ENCODE measurements at regions of chr14 and their contacts with region 1.

Region 1: GRCh38 chr14:68788996-68789820 is 3.7 kb downstream of the ZFP36L1 start:
- DNase-seq: peak; percentile 70 to 91 (median 88)
- ATAC-seq: peak; percentile 64
- H3K4me3 ChIP-seq: peak overlapping the region; percentile 91
- H3K4me3 Mint-ChIP-seq: peak overlapping the region; percentile 92 to 99 (median 95)
- H3K27ac ChIP-seq: peak overlapping the region; percentile 100
- H3K27ac Mint-ChIP-seq: peak overlapping the region; percentile 91 to 100 (median 99)
- H3K4me1 ChIP-seq: peaks cover 37 to 43% of the 10 kb centered on the region in 2 donors
- H3K4me1 Mint-ChIP-seq: peaks cover 43 to 61% (median 50%) of the 10 kb centered on the region in 7 donors
- H3K27me3 ChIP-seq: no peaks in the 10 kb centered on the region
- H3K27me3 Mint-ChIP-seq: peaks cover 0 to 2% (median 0%) of the 10 kb centered on the region in 5 donors

Region 2: GRCh38 chr14:67934008-67934481 is 855.2 kb before region 1 on chr14:
- CTCF ChIA-PET with region 1: no interaction called
- POLR2A ChIA-PET with region 1: no interaction called
- intact Hi-C with region 1: loop called in 1 of 2 experiments (anchors 1 kb)
- DNase-seq: peak in 7 of 9 donors; percentile 24 to 64 (median 43)
- ATAC-seq: peak; percentile 80
- H3K4me3 ChIP-seq: no peak overlapping the region
- H3K4me3 Mint-ChIP-seq: peak overlapping the region in 2 of 10 donors; percentile 15 to 28
- H3K27ac ChIP-seq: peak overlapping the region; percentile 10
- H3K27ac Mint-ChIP-seq: peak overlapping the region in 7 of 9 donors; percentile 2 to 70 (median 56)
- H3K4me1 ChIP-seq: no peaks in the 10 kb centered on the region
- H3K4me1 Mint-ChIP-seq: peaks cover 3 to 11% (median 9%) of the 10 kb centered on the region in 7 donors
- H3K27me3 ChIP-seq: no peaks in the 10 kb centered on the region
- H3K27me3 Mint-ChIP-seq: no peaks in the 10 kb centered on the region

Region 3: GRCh38 chr14:68274725-68275124 is 514.5 kb before region 1 on chr14:
- CTCF ChIA-PET with region 1: interaction called, 5 read pairs
- POLR2A ChIA-PET with region 1: interaction called, 10 read pairs
- intact Hi-C with region 1: no loop called
- DNase-seq: no peak
- ATAC-seq: no peak
- H3K4me3 ChIP-seq: no peak overlapping the region
- H3K4me3 Mint-ChIP-seq: peak overlapping the region in 4 of 10 donors; percentile 7 to 55 (median 41)
- H3K27ac ChIP-seq: no peak overlapping the region
- H3K27ac Mint-ChIP-seq: peak overlapping the region in 4 of 9 donors; percentile 48 to 66 (median 56)
- H3K4me1 ChIP-seq: peaks cover 0 to 31% of the 10 kb centered on the region in 2 donors
- H3K4me1 Mint-ChIP-seq: peaks cover 26 to 82% (median 64%) of the 10 kb centered on the region in 7 donors
- H3K27me3 ChIP-seq: no peaks in the 10 kb centered on the region
- H3K27me3 Mint-ChIP-seq: no peaks in the 10 kb centered on the region

Region 4: GRCh38 chr14:68408680-68409079 is 380.5 kb before region 1 on chr14:
- CTCF ChIA-PET with region 1: interaction called, 15 read pairs
- POLR2A ChIA-PET with region 1: interaction called, 4 read pairs
- intact Hi-C with region 1: loop called in 1 of 2 experiments (anchors 1 kb)
- DNase-seq: peak in 4 of 9 donors; percentile 9 to 27 (median 10)
- ATAC-seq: peak; percentile 58
- H3K4me3 ChIP-seq: no peak overlapping the region
- H3K4me3 Mint-ChIP-seq: no peak overlapping the region
- H3K27ac ChIP-seq: no peak overlapping the region
- H3K27ac Mint-ChIP-seq: peak overlapping the region in 2 of 9 donors; percentile 43 to 60
- H3K4me1 ChIP-seq: peaks cover 5 to 19% of the 10 kb centered on the region in 2 donors
- H3K4me1 Mint-ChIP-seq: peaks cover 24 to 43% (median 39%) of the 10 kb centered on the region in 7 donors
- H3K27me3 ChIP-seq: no peaks in the 10 kb centered on the region
- H3K27me3 Mint-ChIP-seq: no peaks in the 10 kb centered on the region

Region 5: DNA sequence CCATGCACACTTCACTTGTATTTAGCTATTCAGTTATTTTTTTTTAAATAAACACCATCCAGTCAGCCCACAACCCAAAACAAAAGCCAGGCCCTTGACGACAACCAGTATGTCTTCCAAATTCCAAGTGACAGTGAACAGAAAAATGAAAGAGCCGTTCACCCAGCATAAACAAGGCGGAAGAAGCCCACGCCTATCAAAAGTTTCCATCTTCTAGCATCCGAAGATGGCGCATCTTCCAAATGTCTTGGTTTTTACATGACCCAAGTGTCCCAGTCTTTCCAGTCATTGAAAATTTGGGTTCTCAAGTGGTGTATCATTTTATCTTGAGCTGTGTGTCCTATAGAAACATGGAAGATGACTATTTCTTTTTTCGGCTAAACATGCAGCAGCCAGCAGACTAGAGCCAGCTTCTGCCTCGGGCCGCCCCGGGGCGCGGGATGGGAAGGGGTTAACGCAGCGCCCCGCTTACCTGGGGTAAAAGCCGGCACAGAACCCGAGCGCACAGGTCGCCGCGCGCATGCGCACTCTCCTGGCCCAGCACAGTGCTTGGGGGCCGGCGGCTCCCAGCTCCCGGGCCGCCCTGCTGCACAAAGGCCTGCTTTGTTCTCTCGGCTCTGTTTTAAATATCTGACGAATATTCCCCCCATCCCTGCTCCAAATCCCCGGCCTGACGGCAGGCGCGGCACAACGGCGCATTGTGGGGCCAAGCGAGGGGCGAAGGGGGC is 161.2 kb before region 1 on chr14:
- CTCF ChIA-PET with region 1: interaction called, 3 read pairs
- POLR2A ChIA-PET with region 1: interaction called, 12 read pairs
- intact Hi-C with region 1: loop called in 1 of 2 experiments (anchors 2 kb)
- DNase-seq: peak; percentile 34 to 65 (median 47)
- ATAC-seq: peak; percentile 74
- H3K4me3 ChIP-seq: peak overlapping the region; percentile 50
- H3K4me3 Mint-ChIP-seq: peak overlapping the region; percentile 58 to 90 (median 82)
- H3K27ac ChIP-seq: peak overlapping the region; percentile 45
- H3K27ac Mint-ChIP-seq: peak overlapping the region; percentile 38 to 94 (median 87)
- H3K4me1 ChIP-seq: peaks cover 3 to 12% of the 10 kb centered on the region in 2 donors
- H3K4me1 Mint-ChIP-seq: peaks cover 13 to 25% (median 21%) of the 10 kb centered on the region in 7 donors
- H3K27me3 ChIP-seq: no peaks in the 10 kb centered on the region
- H3K27me3 Mint-ChIP-seq: peaks cover 0 to 30% (median 0%) of the 10 kb centered on the region in 5 donors

Region 6: DNA sequence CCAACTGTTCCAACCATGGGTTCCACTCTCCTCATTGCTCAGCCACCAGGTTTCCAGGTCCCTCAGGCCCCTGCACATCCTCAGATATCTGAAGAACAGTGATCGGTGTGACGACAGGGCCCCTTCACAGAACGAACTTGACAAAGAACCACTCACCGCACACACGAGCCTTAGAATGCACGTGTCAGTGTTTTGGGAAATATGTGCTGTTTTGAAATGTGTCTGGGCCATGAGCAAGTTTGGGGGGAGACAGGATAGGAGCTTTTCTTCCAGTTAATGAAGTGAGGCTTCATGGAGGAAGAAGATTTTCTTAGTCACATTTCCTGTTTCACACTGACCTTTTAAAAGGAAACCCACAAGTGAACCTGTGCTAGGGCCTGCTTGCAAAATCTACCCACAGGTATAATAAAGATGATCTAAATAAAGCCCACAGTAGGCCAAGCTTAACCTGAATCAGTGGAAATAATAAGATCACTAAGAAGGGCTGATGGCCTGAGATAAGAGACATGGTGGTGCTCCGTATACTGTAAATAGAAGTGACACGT is 54.9 kb before region 1 on chr14:
- CTCF ChIA-PET with region 1: no interaction called
- POLR2A ChIA-PET with region 1: interaction called, 3 read pairs
- intact Hi-C with region 1: loop called in 1 of 2 experiments (anchors 2 kb)
- DNase-seq: no peak
- ATAC-seq: peak; percentile 60
- H3K4me3 ChIP-seq: no peak overlapping the region
- H3K4me3 Mint-ChIP-seq: peak overlapping the region in 8 of 10 donors; percentile 2 to 50 (median 14)
- H3K27ac ChIP-seq: no peak overlapping the region
- H3K27ac Mint-ChIP-seq: peak overlapping the region in 7 of 9 donors; percentile 3 to 82 (median 66)
- H3K4me1 ChIP-seq: peaks cover 12 to 31% of the 10 kb centered on the region in 2 donors
- H3K4me1 Mint-ChIP-seq: peaks cover 17 to 53% (median 42%) of the 10 kb centered on the region in 7 donors
- H3K27me3 ChIP-seq: no peaks in the 10 kb centered on the region
- H3K27me3 Mint-ChIP-seq: no peaks in the 10 kb centered on the region

Region 7: DNA sequence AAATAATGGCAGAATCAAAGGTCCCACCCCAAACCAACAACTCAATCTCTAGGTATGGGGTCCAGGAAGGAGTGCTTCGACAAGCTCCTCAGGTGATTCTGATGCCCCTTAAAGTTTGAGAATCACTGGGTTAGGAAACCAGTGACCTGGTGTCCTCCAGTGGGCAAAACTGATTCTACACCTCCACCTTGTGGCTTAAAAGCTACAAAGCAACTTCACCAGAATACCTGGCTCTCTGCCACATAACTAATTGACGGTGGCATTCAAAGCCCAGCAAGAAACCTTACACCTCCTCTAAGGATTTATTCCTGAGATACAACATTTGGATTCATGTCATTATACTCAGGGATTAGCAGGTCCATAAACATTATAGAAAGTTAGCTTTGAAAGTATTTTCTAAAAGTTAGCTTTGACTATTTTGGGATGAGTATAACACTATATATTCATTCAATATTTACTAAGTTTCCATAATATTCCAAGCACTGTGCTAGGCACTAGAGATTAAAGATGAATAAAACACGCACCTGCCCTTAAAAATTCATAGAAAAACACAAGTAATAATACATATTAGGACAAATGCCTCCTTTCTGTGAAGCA is 318.3 kb after region 1 on chr14:
- CTCF ChIA-PET with region 1: no interaction called
- POLR2A ChIA-PET with region 1: no interaction called
- intact Hi-C with region 1: no loop called
- DNase-seq: peak in 7 of 9 donors; percentile 31 to 59 (median 47)
- ATAC-seq: peak; percentile 67
- H3K4me3 ChIP-seq: no peak overlapping the region
- H3K4me3 Mint-ChIP-seq: no peak overlapping the region
- H3K27ac ChIP-seq: no peak overlapping the region
- H3K27ac Mint-ChIP-seq: peak overlapping the region in 1 of 9 donors; percentile 29
- H3K4me1 ChIP-seq: no peaks in the 10 kb centered on the region
- H3K4me1 Mint-ChIP-seq: peaks cover 2 to 18% (median 6%) of the 10 kb centered on the region in 7 donors
- H3K27me3 ChIP-seq: no peaks in the 10 kb centered on the region
- H3K27me3 Mint-ChIP-seq: no peaks in the 10 kb centered on the region

Measured in naive thymus-derived CD4-positive, alpha-beta T cell (primary cell).